ENCODE measurements at regions of chr13 and their contacts with region 1.

Region 1: DNA sequence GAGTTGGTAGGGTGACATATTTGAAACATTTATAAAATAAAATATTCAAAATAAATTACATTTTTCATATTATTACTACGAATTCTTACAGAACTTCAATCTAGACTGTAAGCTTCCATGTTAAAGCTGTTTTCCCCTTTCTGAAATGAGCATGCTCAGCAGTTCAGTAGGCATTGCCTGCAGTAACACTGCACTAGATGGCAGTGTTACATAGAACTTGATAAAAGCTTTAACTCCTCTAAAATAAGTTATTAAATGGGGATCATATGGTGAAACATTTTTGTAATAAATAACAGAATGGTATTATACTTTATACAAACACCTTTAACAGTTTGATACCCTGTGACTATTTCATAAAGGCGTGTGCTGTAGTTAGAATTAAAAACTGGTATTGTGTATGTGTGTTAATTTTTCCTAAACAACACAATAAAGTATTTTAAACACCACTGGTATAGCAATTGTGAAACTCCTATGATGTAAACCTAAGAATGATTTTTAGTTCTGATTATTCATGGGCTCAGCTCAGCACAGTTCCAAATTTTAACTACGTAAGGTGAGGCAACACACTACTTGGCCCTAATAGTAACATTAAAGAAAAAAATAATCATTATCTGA is 11.6 kb upstream of the GPR18 start:
- DNase-seq: no peak
- ATAC-seq: peak; percentile 78 to 80
- H3K4me3 ChIP-seq: no peak overlapping the region
- H3K27ac ChIP-seq: no peak overlapping the region
- H3K4me1 ChIP-seq: peaks cover 17 to 22% of the 10 kb centered on the region in 2 donors
- H3K27me3 ChIP-seq: no peaks in the 10 kb centered on the region
- CTCF ChIP-seq: peak; percentile 30 to 69 (median 46)
- POLR2A ChIP-seq: no peak

Region 2: GRCh38 chr13:99124794-99125316 is 144.9 kb before region 1 on chr13:
- in situ Hi-C with region 1: no loop called
- intact Hi-C with region 1: no loop called
- DNase-seq: no peak
- ATAC-seq: no peak
- H3K4me3 ChIP-seq: no peak overlapping the region
- H3K27ac ChIP-seq: no peak overlapping the region
- H3K4me1 ChIP-seq: no peaks in the 10 kb centered on the region
- H3K27me3 ChIP-seq: no peaks in the 10 kb centered on the region
- CTCF ChIP-seq: no peak
- POLR2A ChIP-seq: no peak

Region 3: GRCh38 chr13:99165753-99166587 is 103.8 kb before region 1 on chr13:
- in situ Hi-C with region 1: no loop called
- intact Hi-C with region 1: no loop called
- DNase-seq: no peak
- ATAC-seq: no peak
- H3K4me3 ChIP-seq: no peak overlapping the region
- H3K27ac ChIP-seq: no peak overlapping the region
- H3K4me1 ChIP-seq: no peaks in the 10 kb centered on the region
- H3K27me3 ChIP-seq: no peaks in the 10 kb centered on the region
- CTCF ChIP-seq: no peak
- POLR2A ChIP-seq: no peak

Region 4: DNA sequence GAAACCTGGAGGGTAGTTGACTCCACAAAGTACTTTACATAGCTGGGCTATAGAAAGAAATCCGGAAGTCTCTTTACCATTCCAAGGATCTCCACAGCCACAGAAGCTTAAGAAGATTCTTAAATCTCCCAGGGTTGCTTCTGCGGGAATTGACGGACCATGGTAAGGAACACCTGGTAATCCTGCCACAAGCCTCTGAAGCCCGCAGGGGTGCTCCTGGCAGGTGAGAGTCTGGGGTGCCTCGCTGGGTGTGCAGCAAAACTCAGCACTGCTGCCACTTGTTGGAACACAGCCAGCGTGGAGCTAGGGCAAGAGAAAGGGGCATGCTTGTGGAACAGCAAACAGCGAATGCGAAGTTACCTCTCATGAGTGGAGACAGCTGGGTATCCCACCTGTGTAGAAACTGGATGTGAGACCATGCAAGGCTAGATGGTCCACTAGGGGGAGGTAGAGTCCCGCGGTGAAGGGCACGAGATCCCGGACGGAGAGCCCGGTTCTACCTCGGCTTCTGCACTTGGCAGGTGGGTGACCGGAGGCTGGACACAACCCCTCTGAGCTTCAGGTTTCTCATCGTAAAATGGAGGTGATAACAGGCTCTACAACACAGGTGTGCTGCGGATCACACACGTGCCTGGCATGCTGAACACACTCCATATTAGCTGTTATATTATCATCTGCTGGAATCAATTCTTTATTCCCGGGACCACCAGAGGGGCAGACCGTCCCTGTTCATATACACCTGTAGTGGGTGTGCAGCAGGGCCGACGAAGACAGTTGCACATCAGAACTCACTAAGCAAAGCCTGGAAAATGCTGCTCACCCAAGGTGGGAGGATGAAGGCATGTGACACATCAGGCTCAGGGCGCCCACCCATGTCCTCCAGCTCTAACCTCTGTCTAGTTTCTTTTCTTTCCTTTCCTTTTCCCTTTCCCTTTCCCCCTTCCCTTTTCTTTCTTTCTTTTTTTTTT is 93.1 kb before region 1 on chr13:
- in situ Hi-C with region 1: loop called (anchors 5 kb)
- intact Hi-C with region 1: loop called (anchors 1 kb)
- DNase-seq: peak; percentile 39 to 56
- ATAC-seq: peak; percentile 85 to 92
- H3K4me3 ChIP-seq: no peak overlapping the region
- H3K27ac ChIP-seq: no peak overlapping the region
- H3K4me1 ChIP-seq: no peaks in the 10 kb centered on the region
- H3K27me3 ChIP-seq: no peaks in the 10 kb centered on the region
- CTCF ChIP-seq: peak; percentile 78 to 96 (median 92)
- POLR2A ChIP-seq: no peak

Region 5: DNA sequence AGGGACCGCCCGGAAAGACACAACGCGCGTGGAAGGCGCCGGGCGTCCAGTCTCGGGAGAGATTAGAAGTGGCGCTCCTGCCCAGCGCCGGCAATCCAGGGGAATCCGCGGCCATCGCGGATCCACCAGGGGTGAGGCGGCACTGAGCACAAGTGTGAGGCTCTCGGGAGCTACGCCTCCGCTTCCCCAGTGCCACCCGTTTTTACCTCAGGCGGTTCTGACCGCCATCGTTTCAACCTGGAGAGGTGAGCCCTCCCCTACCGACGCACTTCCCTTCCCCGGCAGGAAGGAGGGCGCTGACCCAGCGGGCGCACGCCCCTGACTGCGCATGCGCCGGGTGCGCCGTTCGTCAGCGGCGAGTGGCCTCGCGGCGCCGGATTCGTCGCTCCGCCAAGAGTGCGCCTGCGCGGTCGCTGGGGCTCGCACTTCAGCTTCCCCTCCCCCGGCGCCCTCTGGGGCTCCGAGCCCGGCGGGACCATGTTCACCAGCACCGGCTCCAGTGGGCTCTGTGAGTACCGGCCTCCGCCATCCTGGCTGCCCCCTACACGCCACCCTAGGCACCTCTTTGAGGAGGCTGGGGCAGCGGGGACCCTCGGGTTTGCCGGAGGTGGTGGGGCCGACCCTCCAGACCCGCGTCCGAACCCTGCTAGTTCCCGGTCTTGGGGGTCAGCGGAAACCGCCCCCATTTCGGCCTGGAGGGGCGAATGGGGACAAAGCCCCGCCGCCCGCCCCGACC is 69.1 kb before region 1 on chr13 and contains the start of gene UBAC2:
- in situ Hi-C with region 1: no loop called
- intact Hi-C with region 1: loop called (anchors 2 kb)
- DNase-seq: peak; percentile 89 to 94
- ATAC-seq: peak; percentile 89 to 91
- H3K4me3 ChIP-seq: peak within 1 kb of the TSS; percentile 87 to 100 (median 98)
- H3K27ac ChIP-seq: peak within 1 kb of the TSS; percentile 98 to 100 (median 100)
- H3K4me1 ChIP-seq: peaks cover 30 to 34% of the 10 kb centered on the region in 2 donors
- H3K27me3 ChIP-seq: no peaks in the 10 kb centered on the region
- CTCF ChIP-seq: no peak
- POLR2A ChIP-seq: peak; percentile 94
- total RNA-seq, gene UBAC2: 51.0 to 71.5 (median 61.1) TPM

Region 6: GRCh38 chr13:99218969-99219368 is 50.8 kb before region 1 on chr13:
- in situ Hi-C with region 1: no loop called
- intact Hi-C with region 1: loop called (anchors 5 kb)
- DNase-seq: no peak
- ATAC-seq: peak in 1 of 2 donors; percentile 17
- H3K4me3 ChIP-seq: no peak overlapping the region
- H3K27ac ChIP-seq: peak overlapping the region; percentile 69 to 84 (median 78)
- H3K4me1 ChIP-seq: peaks cover 68 to 70% of the 10 kb centered on the region in 2 donors
- H3K27me3 ChIP-seq: no peaks in the 10 kb centered on the region
- CTCF ChIP-seq: no peak
- POLR2A ChIP-seq: no peak

Region 7: GRCh38 chr13:99366075-99366987 is 96.6 kb after region 1 on chr13:
- in situ Hi-C with region 1: no loop called
- intact Hi-C with region 1: loop called (anchors 10 kb)
- DNase-seq: no peak
- ATAC-seq: no peak
- H3K4me3 ChIP-seq: no peak overlapping the region
- H3K27ac ChIP-seq: no peak overlapping the region
- H3K4me1 ChIP-seq: peaks cover 9 to 15% of the 10 kb centered on the region in 2 donors
- H3K27me3 ChIP-seq: no peaks in the 10 kb centered on the region
- CTCF ChIP-seq: no peak
- POLR2A ChIP-seq: no peak

Region 8: DNA sequence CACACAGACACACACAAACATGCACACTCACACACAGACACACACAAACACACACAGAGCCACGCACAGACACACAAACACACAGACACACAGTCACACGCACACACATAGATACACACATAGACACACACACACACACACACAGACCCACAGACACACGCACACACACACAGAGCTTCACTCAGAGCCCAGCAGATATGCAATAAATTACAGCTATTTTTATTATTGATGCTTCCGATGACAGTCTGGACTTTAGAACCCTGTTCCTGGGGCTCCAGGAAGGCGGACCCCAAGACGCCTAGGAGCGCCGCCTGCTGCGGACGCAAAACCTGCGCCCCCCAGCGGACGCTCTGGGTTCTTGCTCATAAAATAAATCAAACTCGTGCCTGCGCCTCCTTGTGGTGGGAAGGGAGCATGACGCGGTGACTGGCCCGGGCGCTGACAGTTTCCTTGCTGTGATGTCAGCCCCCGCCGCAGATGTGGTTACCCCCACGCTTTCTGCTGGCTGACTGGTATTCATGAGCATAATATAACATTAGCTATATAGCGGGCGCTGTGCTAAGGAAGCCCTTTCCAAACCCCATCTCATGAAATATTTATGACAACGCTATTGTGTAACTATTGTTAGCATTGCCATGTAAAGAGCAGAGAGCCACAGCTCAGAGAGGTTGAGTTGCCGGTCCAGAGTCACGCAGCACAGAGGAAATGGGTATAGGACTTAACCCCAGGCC is 167.1 kb after region 1 on chr13:
- in situ Hi-C with region 1: loop called (anchors 5 to 25 kb)
- intact Hi-C with region 1: loop called (anchors 1 kb)
- DNase-seq: peak; percentile 58 to 70
- ATAC-seq: peak; percentile 43 to 74
- H3K4me3 ChIP-seq: peak overlapping the region in 1 of 4 donors; percentile 1
- H3K27ac ChIP-seq: no peak overlapping the region
- H3K4me1 ChIP-seq: peaks cover 5 to 6% of the 10 kb centered on the region in 2 donors
- H3K27me3 ChIP-seq: no peaks in the 10 kb centered on the region
- CTCF ChIP-seq: peak; percentile 96 to 100 (median 99)
- POLR2A ChIP-seq: no peak

Measured in gastrocnemius medialis (tissue), 4 donors.